ENCODE measurements at regions of chr1 and their contacts with region 1.

Region 1: DNA sequence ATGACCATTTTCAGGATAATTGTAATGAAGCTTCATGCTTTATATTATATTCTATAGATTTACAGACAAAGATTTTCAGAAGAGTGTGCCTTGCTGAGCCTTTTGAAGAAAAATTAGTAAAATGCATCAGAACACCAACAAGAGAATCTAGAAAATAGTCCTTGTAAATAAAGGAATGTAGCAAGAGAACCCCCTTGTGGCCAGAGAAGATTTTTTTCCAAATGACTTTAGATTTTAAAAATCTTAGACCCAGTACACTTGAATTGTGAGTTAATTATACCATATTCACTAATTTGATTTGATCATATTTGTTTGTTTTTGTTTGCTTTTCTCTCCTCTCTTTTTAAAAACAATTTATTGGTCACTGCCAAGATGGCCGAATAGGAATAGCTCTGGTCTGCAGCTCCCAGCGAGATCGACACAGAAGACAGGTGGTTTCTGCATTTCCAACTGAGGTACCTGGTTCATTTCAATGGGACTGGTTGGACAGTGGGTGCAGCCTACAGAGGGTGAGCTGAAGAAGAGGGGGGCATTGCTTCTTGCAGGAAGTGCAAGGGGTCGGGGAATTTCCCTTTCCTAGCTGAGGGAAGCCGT is 12.8 kb upstream of the IFI44L start:
- DNase-seq: no peak
- H3K4me3 ChIP-seq: no peak overlapping the region
- H3K27ac ChIP-seq: no peak overlapping the region
- H3K4me1 ChIP-seq: no peaks in the 10 kb centered on the region
- H3K27me3 ChIP-seq: no peaks in the 10 kb centered on the region
- CTCF ChIP-seq: peak; percentile 52 to 66 (median 58)
- EP300 ChIP-seq: no peak
- POLR2A ChIP-seq: no peak

Region 2: DNA sequence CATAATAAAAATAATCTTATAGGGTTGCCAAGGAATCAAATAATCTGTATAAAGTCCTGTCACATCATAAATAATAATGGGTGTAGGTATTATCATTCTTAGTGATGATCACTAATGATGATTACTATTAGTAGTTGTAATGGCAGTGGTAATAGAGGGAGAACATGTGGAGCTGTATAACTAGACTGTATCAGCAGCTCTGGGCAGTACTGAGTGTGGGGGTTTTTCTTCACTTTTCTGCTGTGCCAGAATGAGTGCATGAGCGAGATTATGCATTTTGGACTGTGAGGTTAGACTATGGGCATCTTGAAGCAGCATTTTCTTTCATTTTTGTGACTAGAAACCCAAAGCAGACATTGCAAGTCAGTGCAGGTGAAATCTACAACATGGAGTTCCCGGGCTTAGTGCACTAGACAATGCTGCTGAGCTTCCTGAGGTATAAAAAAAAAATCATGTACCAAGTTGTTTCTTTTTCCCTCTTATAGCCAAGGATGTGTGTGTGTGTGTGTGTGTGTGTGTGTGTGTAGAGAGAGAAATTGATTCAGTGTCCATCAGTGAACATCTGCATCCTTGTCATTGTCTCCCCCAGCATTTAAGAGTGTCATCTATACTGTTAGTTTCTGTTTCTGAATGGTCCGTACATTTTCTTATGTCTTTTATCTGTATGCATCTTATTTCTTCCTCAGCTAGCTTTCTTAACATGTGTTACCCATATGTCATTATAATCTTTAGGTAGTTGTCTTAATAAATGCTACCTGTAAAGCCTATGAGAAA is 475.1 kb before region 1 on chr1:
- in situ Hi-C with region 1: loop called in 3 of 4 experiments (anchors 5 to 10 kb)
- intact Hi-C with region 1: no loop called
- DNase-seq: no peak
- H3K4me3 ChIP-seq: no peak overlapping the region
- H3K27ac ChIP-seq: no peak overlapping the region
- H3K4me1 ChIP-seq: no peaks in the 10 kb centered on the region
- H3K27me3 ChIP-seq: no peaks in the 10 kb centered on the region
- CTCF ChIP-seq: no peak
- EP300 ChIP-seq: no peak
- POLR2A ChIP-seq: no peak

Region 3: DNA sequence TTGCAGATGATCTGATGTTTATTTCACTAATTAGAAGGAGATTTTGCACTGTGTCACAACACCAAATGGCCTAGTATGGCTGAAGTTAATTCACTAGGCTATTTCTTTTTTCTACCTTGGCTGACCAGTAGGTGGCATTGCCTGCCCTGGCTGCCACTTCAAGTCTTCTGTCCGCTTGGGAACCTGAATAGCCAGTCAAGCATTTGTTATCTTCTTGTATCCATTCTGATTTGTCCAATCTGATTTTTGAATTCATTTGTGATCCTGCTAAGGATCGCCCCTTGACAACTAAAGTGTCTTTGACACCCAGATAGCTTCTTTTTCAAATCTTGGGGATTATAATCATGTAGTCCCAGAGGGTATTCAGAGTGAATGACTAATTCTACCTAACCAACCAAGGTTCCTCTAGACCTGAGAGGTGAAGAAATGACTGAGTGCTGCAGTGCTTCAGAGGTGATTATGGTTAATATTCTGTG is 462.3 kb before region 1 on chr1:
- in situ Hi-C with region 1: loop called in 1 of 4 experiments (anchors 5 kb)
- intact Hi-C with region 1: loop called (anchors 2 kb)
- DNase-seq: peak; percentile 56
- H3K4me3 ChIP-seq: no peak overlapping the region
- H3K27ac ChIP-seq: no peak overlapping the region
- H3K4me1 ChIP-seq: peaks cover 0 to 20% (median 7%) of the 10 kb centered on the region in 4 donors
- H3K27me3 ChIP-seq: no peaks in the 10 kb centered on the region
- CTCF ChIP-seq: peak; percentile 79 to 92 (median 86)
- EP300 ChIP-seq: no peak
- POLR2A ChIP-seq: no peak

Region 4: GRCh38 chr1:78688701-78689100 is 81.3 kb after region 1 on chr1:
- in situ Hi-C with region 1: loop called in 1 of 4 experiments (anchors 10 kb)
- intact Hi-C with region 1: no loop called
- DNase-seq: no peak
- H3K4me3 ChIP-seq: no peak overlapping the region
- H3K27ac ChIP-seq: no peak overlapping the region
- H3K4me1 ChIP-seq: no peaks in the 10 kb centered on the region
- H3K27me3 ChIP-seq: no peaks in the 10 kb centered on the region
- CTCF ChIP-seq: no peak
- EP300 ChIP-seq: no peak
- POLR2A ChIP-seq: no peak